Activated T-helper 1 cell treated with anti-CD3 and anti-CD28 coated beads, Interleukin-12 subunit alpha, Interleukin-12 subunit beta, Interleukin-2, Interleukin-4 antibody, amounts not matched to agents 30 ng/mL and 10 ng/mL and 1 ng/mL, durations not matched to agents 14 hours and 24 hours and 36 hours (primary cell): ENCODE measurements at regions of chr5 and their contacts with region 1.

Region 1: DNA sequence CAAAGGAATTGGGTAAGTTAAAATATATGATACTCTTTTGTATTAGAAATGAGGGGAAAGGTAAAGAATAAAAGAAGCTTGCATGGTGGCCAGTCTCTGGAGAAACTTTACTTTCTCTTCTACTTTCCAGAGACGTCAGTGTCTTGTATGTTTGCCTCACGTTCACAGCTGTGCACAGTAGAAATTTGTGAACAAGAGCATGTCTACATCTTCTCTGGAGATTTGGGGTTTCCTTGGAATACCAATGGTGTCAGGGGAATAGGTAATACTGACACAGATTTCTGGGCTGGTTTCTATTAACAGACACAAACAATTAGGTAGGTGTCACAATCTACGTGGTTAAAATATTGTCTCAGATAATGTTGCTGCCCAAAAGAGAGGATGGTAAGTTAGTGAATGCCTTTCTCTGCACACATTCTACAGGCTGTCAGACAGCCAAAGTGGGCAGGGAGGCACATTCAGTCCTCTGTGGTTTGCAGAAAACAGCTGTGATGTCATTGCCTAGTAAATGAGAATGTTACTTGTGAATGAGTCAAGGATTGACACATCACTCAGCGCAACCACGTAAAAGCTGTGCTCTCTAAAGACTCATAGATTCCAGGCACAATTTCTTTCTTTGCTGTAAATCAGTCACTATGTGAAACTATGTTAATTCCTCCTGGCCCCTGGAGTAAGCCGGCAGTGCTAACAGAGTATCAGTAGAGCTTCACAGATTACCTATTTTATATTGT is 397.1 kb downstream of the MAN2A1 start:
- DNase-seq: peak; percentile 43
- H3K4me3 Mint-ChIP-seq: peak overlapping the region; percentile 53
- H3K27ac Mint-ChIP-seq: peak overlapping the region; percentile 87
- H3K4me1 Mint-ChIP-seq: peaks cover 45% of the 10 kb centered on the region
- H3K27me3 Mint-ChIP-seq: no peaks in the 10 kb centered on the region

Region 2: DNA sequence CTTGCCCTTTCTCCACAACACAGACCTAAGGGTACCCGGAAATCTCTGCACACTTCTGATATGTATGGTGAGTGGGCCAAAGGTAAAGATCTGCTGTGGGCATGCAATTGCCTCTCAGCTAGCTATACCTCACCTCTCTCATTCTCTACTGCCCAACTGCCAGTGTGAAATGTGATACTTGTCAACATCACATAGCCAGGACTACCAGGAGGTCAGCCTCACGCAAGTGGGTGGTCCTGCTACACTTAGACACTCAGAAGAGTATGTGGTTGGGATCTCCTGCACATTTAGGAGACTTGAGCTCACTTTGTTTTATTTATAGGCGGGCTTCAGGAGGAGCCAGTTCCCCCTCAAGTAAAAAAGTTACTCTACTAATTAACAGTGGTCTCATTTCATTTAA is 485.1 kb before region 1 on chr5:
- intact Hi-C with region 1: no loop called
- DNase-seq: no peak
- H3K4me3 Mint-ChIP-seq: no peak overlapping the region
- H3K27ac Mint-ChIP-seq: no peak overlapping the region
- H3K4me1 Mint-ChIP-seq: no peaks in the 10 kb centered on the region
- H3K27me3 Mint-ChIP-seq: no peaks in the 10 kb centered on the region

Region 3: DNA sequence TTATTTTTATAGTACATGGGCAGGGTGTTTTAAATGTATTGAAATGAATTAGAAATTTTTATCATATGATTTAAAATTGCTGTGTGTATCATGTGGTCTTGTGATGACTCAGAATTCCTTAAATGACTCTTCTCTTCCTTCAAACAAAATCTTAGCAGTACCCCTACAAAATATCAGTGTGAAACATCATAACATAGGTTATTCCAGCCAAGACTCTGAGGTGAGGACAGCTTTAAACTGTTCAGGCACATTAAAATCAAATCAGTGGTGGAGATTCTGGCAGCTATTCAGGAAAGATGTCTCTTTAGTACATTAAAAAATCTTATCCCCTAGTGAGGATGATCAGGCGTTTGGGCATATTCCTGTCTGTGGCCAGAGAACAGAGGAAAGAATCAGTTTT is 223.1 kb before region 1 on chr5:
- intact Hi-C with region 1: loop called (anchors 1 kb)
- DNase-seq: no peak
- H3K4me3 Mint-ChIP-seq: no peak overlapping the region
- H3K27ac Mint-ChIP-seq: peak overlapping the region; percentile 38
- H3K4me1 Mint-ChIP-seq: peaks cover 50% of the 10 kb centered on the region
- H3K27me3 Mint-ChIP-seq: no peaks in the 10 kb centered on the region

Region 4: GRCh38 chr5:109936996-109937395 is 149.8 kb before region 1 on chr5:
- intact Hi-C with region 1: loop called (anchors 1 kb)
- DNase-seq: peak; percentile 24
- H3K4me3 Mint-ChIP-seq: peak overlapping the region; percentile 25
- H3K27ac Mint-ChIP-seq: peak overlapping the region; percentile 56
- H3K4me1 Mint-ChIP-seq: peaks cover 26% of the 10 kb centered on the region
- H3K27me3 Mint-ChIP-seq: no peaks in the 10 kb centered on the region

Region 5: GRCh38 chr5:109956884-109957283 is 129.9 kb before region 1 on chr5:
- intact Hi-C with region 1: no loop called
- DNase-seq: no peak
- H3K4me3 Mint-ChIP-seq: no peak overlapping the region
- H3K27ac Mint-ChIP-seq: no peak overlapping the region
- H3K4me1 Mint-ChIP-seq: no peaks in the 10 kb centered on the region
- H3K27me3 Mint-ChIP-seq: no peaks in the 10 kb centered on the region

Region 6: DNA sequence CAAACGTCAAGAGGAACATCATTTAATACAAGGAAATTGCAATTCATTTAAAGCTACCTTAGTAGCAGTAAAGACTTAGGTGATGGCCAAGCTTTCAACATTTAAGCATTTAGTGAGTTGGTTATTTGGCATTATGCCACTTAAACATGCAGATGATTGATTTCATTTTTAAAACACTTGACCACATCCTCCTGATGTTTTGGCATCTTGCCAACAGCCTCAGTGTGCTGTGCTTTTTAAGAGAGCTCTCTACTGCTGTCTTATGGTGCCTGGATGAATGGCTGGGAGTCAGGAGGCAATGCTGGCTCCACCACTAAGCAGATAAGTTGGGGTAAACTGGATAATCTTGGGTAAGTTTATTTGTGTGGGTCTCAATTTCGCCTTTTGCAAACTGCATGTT is 32.6 kb before region 1 on chr5:
- intact Hi-C with region 1: loop called (anchors 1 kb)
- DNase-seq: peak; percentile 72
- H3K4me3 Mint-ChIP-seq: no peak overlapping the region
- H3K27ac Mint-ChIP-seq: peak overlapping the region; percentile 74
- H3K4me1 Mint-ChIP-seq: peaks cover 27% of the 10 kb centered on the region
- H3K27me3 Mint-ChIP-seq: no peaks in the 10 kb centered on the region

Region 7: GRCh38 chr5:110194191-110194590 is 107.4 kb after region 1 on chr5:
- intact Hi-C with region 1: no loop called
- DNase-seq: no peak
- H3K4me3 Mint-ChIP-seq: no peak overlapping the region
- H3K27ac Mint-ChIP-seq: no peak overlapping the region
- H3K4me1 Mint-ChIP-seq: no peaks in the 10 kb centered on the region
- H3K27me3 Mint-ChIP-seq: no peaks in the 10 kb centered on the region

Region 8: DNA sequence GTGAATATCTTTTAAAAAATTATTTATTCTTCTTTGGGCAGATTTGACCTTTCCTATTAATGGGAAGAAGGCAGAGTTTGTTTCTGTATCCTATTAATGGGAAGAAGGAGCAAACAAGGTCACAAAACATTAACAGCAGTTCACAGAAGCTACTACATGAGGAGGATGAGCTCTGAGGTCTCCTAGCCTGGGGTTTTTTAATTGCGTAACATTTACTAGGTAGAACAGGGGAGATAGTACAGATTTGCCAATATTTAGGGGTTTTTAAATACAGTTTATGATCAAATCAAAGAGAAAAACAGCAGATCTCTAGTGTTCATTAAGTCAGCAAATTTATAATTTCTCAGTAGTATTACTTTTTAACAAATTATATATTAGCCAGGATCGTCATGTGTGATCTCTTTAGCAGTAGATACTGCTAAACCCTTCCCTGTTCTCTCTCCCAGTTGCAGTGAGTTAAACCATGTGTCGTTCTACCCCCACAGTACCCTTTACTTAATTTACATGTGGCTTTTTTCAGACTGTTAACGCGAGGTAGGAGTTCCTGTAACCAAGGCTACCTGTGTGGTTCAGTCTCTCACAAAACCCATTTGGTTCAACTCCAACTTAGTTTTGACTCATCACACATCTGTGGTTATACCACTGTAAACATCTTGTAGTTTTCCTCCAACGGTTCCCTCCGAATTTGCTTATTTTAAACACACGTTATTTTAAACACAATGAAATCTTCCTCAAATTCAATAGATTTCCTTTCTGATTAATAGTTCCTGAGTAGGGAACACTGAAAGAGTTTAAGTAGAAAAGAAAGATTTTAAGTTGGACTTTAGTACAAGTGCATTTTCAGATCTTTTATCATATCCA is 665.3 kb after region 1 on chr5:
- intact Hi-C with region 1: loop called (anchors 5 kb)
- DNase-seq: peak; percentile 52
- H3K4me3 Mint-ChIP-seq: peak overlapping the region; percentile 64
- H3K27ac Mint-ChIP-seq: peak overlapping the region; percentile 92
- H3K4me1 Mint-ChIP-seq: peaks cover 60% of the 10 kb centered on the region
- H3K27me3 Mint-ChIP-seq: no peaks in the 10 kb centered on the region